GM12878 (cell line): ENCODE measurements at regions of chr11 and their contacts with region 1.

Region 1: GRCh38 chr11:116853461-116854073 is 16.1 kb upstream of the APOA1 start:
- DNase-seq: peak; percentile 90
- ATAC-seq: peak; percentile 98
- H3K4me3 ChIP-seq: peak overlapping the region; percentile 31; the same call in 1 of the 2 replicates
- H3K27ac ChIP-seq: peak overlapping the region; percentile 83
- H3K4me1 ChIP-seq: peaks cover 30% of the 10 kb centered on the region
- H3K27me3 ChIP-seq: no peaks in the 10 kb centered on the region
- CTCF ChIP-seq: no peak
- EP300 ChIP-seq: peak; percentile 79 to 84
- POLR2A ChIP-seq: no peak
- RAD21 ChIP-seq: no peak

Region 2: DNA sequence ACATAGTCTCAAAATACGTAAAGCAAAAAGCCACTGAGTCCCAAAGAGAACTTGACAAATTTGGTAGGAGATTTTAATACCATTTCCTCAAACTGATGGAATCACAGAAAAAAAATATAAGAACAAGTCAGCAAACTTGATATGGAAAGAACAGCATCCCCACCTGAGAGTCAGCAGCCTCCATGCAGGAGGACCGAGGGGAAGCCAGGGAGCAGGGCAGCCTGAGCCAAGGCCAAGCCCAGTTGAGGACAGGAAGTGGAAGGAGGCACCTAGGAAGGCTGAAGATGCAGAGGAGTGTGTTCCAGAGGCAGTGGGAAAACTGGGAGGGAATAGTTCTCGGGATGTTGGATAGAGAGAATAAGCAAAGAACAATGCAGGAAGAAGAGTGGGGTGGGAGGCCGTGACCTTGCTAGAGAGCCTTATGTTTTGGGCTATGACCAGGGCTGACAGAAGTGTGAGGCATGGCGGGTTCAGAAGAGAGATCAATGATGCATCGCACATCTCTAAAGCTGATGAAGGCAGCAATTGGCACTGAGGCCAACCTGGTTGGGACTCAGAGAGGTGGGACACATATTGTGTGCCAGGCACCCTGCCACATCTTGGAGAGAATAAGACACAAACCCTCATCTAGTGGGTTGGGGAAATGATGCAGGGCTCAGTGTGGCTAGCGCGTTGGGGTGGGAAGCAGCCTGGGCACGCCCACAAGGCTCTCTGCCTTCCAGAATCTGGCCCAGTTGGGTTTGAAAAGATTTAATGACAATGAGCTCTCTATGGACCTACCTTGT is 45.8 kb before region 1 on chr11:
- CTCF ChIA-PET with region 1: no interaction called
- POLR2A ChIA-PET with region 1: no interaction called
- RAD21 ChIA-PET with region 1: no interaction called
- SMC1A ChIA-PET with region 1: no interaction called
- in situ Hi-C with region 1: no loop called
- intact Hi-C with region 1: no loop called
- DNase-seq: no peak
- ATAC-seq: no peak
- H3K4me3 ChIP-seq: no peak overlapping the region
- H3K27ac ChIP-seq: no peak overlapping the region
- H3K4me1 ChIP-seq: no peaks in the 10 kb centered on the region
- H3K27me3 ChIP-seq: no peaks in the 10 kb centered on the region; a peak in 1 of 4 replicates
- CTCF ChIP-seq: no peak
- EP300 ChIP-seq: no peak
- POLR2A ChIP-seq: no peak
- RAD21 ChIP-seq: no peak

Region 3: GRCh38 chr11:116879800-116880625 is 26.4 kb after region 1 on chr11:
- CTCF ChIA-PET with region 1: interaction called, 13 read pairs
- POLR2A ChIA-PET with region 1: no interaction called
- RAD21 ChIA-PET with region 1: interaction called, 7 read pairs
- SMC1A ChIA-PET with region 1: interaction called, 10 read pairs
- in situ Hi-C with region 1: no loop called
- intact Hi-C with region 1: no loop called
- DNase-seq: peak; percentile 42
- ATAC-seq: peak; percentile 96
- H3K4me3 ChIP-seq: no peak overlapping the region
- H3K27ac ChIP-seq: no peak overlapping the region
- H3K4me1 ChIP-seq: no peaks in the 10 kb centered on the region
- H3K27me3 ChIP-seq: no peaks in the 10 kb centered on the region
- CTCF ChIP-seq: peak; percentile 62 to 72 (median 71); a peak in 5 of 6 replicates
- EP300 ChIP-seq: no peak
- POLR2A ChIP-seq: no peak
- RAD21 ChIP-seq: peak; percentile 87

Region 4: GRCh38 chr11:116927163-116927974 is 73.8 kb after region 1 on chr11:
- CTCF ChIA-PET with region 1: no interaction called
- POLR2A ChIA-PET with region 1: no interaction called
- RAD21 ChIA-PET with region 1: interaction called, 15 read pairs
- SMC1A ChIA-PET with region 1: no interaction called
- in situ Hi-C with region 1: no loop called
- intact Hi-C with region 1: no loop called
- DNase-seq: no peak
- ATAC-seq: no peak
- H3K4me3 ChIP-seq: no peak overlapping the region
- H3K27ac ChIP-seq: peak overlapping the region; percentile 26; the same call in 1 of the 2 replicates
- H3K4me1 ChIP-seq: peaks cover 64% of the 10 kb centered on the region
- H3K27me3 ChIP-seq: no peaks in the 10 kb centered on the region
- CTCF ChIP-seq: peak in 2 of 3 experiments; percentile 20 to 39; a peak in 2 of 6 replicates
- EP300 ChIP-seq: no peak
- POLR2A ChIP-seq: no peak
- RAD21 ChIP-seq: peak; percentile 56

Region 5: DNA sequence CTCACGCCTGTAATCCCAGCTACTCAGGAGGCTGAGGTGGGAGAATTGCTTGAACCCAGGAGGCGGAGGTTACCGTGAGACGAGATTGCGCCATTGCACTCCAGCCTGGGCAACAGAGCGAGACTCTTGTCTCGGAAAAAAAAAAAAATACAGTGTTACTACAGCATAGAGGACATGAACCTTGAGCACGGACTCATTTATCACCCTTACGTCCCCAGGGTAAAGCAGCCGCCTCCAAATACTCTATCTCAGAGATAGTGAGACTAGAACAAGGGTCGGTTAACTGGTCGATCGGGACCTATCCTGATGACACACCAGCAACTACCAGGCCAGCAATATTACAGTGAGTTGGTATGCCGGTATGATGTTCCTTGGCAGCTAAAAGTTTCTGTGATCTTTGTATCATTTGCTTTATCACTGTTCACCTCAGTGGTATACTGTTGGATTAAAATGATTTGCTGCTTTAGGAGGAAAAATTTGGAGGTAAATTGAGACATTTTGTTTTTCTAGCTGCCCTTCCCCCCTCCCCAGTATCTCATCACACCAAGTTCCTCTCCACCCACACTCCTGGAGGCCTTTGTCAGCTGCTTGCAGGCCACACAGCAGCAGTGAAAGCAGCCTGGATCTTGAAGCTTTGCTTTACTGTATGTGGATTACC is 318.0 kb after region 1 on chr11:
- CTCF ChIA-PET with region 1: no interaction called
- POLR2A ChIA-PET with region 1: no interaction called
- RAD21 ChIA-PET with region 1: no interaction called
- SMC1A ChIA-PET with region 1: no interaction called
- in situ Hi-C with region 1: no loop called
- intact Hi-C with region 1: no loop called
- DNase-seq: no peak
- ATAC-seq: no peak
- H3K4me3 ChIP-seq: no peak overlapping the region
- H3K27ac ChIP-seq: no peak overlapping the region
- H3K4me1 ChIP-seq: no peaks in the 10 kb centered on the region
- H3K27me3 ChIP-seq: no peaks in the 10 kb centered on the region
- CTCF ChIP-seq: no peak
- EP300 ChIP-seq: no peak
- POLR2A ChIP-seq: 0 out of 2 replicates have a peak, but pooled peaks have one; percentile 43
- RAD21 ChIP-seq: no peak